GM13976 (cell line): ENCODE measurements at regions of chr14 and their contacts with region 1.

Region 1: GRCh38 chr14:104770851-104771272 is 17.9 kb downstream of the SIVA1 start:
- DNase-seq: no peak
- CTCF ChIP-seq: peak; percentile 7

Region 2: DNA sequence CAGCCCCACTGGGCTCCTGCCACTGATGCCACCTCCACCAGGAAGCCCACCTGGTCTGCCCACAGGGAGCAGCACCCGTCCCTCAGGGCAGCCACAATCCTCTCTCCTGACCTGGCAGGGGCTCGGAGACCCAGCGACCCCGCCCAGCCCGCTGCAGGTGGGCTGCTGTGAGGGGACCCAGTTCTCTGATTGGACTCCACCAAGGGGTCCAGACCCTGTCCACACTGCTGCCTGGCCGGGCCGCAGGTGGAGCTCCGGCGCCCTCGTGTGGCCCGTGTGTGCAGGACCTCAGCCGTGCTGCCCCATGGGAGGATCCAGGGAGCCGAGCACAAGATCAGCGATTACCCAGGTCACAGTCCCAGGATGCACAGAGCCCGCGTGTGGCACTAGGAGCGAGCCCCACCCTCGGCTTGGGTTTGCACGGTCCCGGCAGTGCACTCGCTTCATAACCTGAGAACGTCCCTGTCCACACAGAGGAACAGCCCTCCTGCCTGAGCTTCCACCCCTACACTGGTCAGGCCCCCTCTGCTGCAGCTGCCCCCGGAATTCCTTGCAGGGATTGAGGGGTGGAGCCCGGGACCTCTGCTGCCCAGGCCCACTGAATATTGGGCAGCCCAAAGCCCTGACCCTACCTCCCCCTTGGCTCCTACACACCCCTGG is 130.8 kb before region 1 on chr14:
- in situ Hi-C with region 1: no loop called
- DNase-seq: peak; percentile 90
- CTCF ChIP-seq: peak; percentile 94

Region 3: DNA sequence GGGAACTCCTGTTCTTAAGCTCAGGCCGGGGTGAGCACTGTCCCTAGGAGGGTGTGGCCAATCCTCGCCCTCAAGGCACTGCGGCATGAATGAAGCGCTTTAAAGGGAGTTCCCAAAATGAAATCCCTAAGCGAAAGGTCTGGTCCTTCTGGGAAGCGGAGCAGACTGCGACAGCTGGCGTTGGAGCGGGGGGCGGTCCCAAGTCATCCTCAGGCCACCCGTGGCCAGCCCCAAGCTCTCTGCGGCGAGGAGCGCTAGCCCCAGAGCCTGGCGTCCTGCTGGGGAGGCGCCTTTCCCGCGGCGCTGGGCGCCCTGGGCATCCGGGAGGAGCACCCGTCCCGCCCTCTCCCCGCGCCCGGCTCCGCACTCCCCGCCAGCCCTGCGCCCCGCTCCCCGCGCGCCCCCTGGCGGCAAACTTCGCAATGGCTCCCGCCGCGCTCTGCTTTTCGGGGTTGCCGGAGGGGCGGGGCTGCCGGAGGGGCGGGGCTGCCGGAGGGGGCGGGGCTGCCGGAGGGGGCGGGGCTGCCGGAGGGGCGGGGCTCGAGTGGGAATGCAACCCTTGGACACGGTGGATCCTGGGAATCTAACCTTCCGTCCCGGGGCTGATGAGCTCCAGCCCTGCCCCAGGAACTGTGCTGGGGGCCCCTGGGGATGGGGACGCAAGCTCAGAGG is 55.5 kb after region 1 on chr14:
- in situ Hi-C with region 1: loop called (anchors 5 kb)
- DNase-seq: peak; percentile 96
- CTCF ChIP-seq: peak; percentile 89